Heart left ventricle (tissue), 16 donors: ENCODE measurements at regions of chr12 and their contacts with region 1.

Region 1: DNA sequence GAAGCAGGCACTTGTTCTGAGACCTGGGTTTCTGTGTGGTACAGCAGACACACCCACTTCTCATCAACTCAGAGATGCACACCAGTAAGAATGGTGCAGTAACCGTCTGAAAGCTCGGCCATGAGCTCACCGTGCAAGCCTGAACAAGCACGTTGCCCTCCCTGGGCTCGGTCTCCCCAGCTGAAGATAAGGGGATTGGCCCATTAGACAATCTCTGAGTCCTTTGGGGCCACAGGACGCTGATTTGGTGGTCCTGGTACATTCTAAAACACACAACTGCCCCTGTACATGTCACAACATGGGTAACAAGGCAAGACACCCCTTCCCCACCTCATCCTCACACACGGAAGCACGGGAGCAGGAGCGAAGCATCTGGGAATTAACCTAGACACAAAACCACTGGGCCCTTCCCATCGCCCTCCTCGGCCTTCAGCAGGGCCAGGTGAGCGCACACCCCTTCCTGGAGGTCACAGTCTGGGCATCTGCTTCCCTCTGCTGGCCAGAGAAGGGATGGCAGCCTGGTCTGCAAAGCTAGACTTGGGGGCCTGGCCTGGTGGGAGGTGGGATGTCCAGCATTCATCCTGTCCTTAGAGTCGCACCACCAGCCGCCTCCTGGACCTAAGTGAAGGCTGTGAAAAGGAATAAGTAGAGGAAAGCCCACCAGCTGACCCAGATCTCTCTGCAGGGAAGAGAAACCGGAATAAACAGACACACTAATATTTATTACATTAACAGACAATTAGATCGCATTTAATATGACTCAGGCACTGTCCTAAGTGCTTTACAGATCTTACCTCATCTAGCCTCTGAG is 18.9 kb upstream of the SMUG1 start:
- DNase-seq: peak; percentile 46 to 81 (median 67)
- ATAC-seq: peak; percentile 45 to 71 (median 70)
- H3K4me3 ChIP-seq: no peak overlapping the region
- H3K27ac ChIP-seq: no peak overlapping the region
- H3K4me1 ChIP-seq: no peaks in the 10 kb centered on the region
- H3K27me3 ChIP-seq: peaks cover 0 to 64% (median 12%) of the 10 kb centered on the region in 9 donors
- CTCF ChIP-seq: peak; percentile 74 to 89 (median 84)
- POLR2A ChIP-seq: no peak

Region 2: DNA sequence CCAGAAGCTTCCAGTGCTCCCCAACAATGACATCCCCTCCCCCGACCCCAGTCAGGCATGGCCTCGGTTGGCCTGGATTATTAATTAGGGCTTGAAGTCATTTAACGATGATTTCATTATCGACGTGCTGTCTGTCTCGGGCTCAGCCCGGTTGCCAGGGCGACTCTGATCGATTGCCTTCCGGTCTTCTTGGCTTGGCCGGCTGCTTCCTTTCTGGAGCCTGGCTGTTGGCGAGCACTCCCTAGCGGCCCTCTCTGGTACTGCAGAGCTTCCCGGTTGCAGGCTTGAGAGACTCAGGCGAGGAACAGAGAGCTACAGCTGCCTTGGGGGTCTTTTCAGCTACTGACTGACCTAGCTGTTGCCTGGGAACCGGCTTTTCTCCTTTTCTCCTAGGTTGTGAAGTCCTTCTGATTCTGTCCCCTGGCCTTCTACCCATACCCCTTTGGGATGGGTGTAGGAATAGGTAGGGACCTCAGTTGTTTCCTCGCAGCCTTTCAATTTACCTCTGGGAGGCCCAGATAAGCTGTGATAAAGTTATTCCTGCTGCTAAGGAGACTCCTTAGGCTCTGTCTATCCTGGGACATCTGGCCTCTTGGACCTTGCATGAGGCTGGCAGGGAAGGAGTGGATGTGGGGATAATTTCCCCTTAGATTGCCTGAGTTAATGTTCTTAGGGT is 450.5 kb before region 1 on chr12:
- intact Hi-C with region 1: loop called in 1 of 10 experiments (anchors 10 kb)
- DNase-seq: peak; percentile 62 to 86 (median 79)
- ATAC-seq: peak; percentile 25 to 58 (median 51)
- H3K4me3 ChIP-seq: peak overlapping the region in 5 of 12 donors; percentile 5 to 27 (median 26)
- H3K27ac ChIP-seq: no peak overlapping the region
- H3K4me1 ChIP-seq: peaks cover 0 to 21% (median 4%) of the 10 kb centered on the region in 12 donors
- H3K27me3 ChIP-seq: peaks cover 0 to 58% (median 5%) of the 10 kb centered on the region in 9 donors
- CTCF ChIP-seq: peak; percentile 80 to 94 (median 88)
- POLR2A ChIP-seq: no peak

Region 3: GRCh38 chr12:54140588-54141388 is 66.9 kb before region 1 on chr12:
- intact Hi-C with region 1: no loop called
- DNase-seq: peak in 3 of 5 donors; percentile 16 to 60 (median 23)
- ATAC-seq: peak in 3 of 4 donors; percentile 52 to 76 (median 69)
- H3K4me3 ChIP-seq: no peak overlapping the region
- H3K27ac ChIP-seq: peak overlapping the region in 8 of 12 donors; percentile 8 to 57 (median 50)
- H3K4me1 ChIP-seq: peaks cover 0 to 16% (median 0%) of the 10 kb centered on the region in 12 donors
- H3K27me3 ChIP-seq: peaks cover 0 to 59% (median 20%) of the 10 kb centered on the region in 9 donors
- CTCF ChIP-seq: no peak
- POLR2A ChIP-seq: no peak

Region 4: GRCh38 chr12:54153586-54153985 is 54.1 kb before region 1 on chr12:
- intact Hi-C with region 1: no loop called
- DNase-seq: no peak
- ATAC-seq: no peak
- H3K4me3 ChIP-seq: no peak overlapping the region
- H3K27ac ChIP-seq: no peak overlapping the region
- H3K4me1 ChIP-seq: no peaks in the 10 kb centered on the region
- H3K27me3 ChIP-seq: peaks cover 0 to 68% (median 8%) of the 10 kb centered on the region in 9 donors
- CTCF ChIP-seq: no peak
- POLR2A ChIP-seq: no peak